A549 (cell line): ENCODE measurements at regions of chr12 and their contacts with region 1.

Region 1: DNA sequence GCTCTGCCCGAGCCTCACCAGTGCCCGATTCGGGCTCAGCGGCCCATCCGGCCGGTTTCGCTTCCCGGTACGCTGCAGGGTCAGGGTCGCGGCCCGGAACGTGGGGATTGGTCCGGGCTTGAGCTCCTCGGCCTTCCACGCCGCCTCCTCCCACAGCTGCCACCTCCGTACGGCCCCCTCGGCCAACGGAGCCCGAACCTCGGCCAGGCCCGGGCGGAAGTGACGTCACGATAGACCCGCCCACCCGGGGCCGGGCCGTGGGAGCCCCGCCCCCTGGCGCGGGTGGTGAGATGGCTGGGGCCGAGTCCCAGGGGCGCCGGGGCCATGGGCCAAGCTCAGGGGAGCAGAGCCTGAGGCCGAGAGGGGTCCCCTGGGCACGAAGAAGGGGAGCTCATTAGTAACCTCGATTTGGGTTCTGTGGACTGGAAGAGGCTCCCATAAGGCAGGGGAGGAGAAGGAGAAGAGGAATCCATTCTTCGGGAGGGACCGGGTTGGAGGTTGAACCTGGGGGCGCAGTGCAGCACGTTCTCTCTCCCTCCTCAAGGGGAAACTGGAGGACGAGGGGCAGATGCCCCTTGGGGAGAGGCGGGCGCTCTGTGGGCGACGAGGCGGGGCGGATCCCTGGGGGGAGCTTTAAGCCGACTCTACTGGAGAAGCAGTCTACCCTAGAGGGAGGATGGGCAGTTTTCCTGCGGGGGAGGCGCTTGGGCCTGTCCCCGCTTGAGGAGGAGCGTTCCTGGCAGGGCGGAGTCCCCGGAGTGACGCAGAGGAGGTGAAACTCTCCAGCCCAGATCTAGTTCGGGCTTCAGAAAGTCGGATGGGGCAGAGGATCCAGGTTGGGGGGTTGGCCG is at the start of gene MLF2:
- DNase-seq: peak; percentile 98 to 99
- ATAC-seq: peak; percentile 93 to 94
- H3K4me3 ChIP-seq: peak within 1 kb of the TSS; percentile 98
- H3K27ac ChIP-seq: peak within 1 kb of the TSS; percentile 97 to 98
- H3K4me1 ChIP-seq: peaks cover 21% of the 10 kb centered on the region
- CTCF ChIP-seq: no peak; the same call in 2 of the 3 replicates
- EP300 ChIP-seq: no peak
- POLR2A ChIP-seq: peak; percentile 94
- RAD21 ChIP-seq: no peak; a peak in 2 of 5 replicates
- polyA plus RNA-seq, gene MLF2: 302 and 310 TPM in 2 replicates

Region 2: GRCh38 chr12:6723607-6724396 is 29.3 kb before region 1 on chr12 and contains the start of gene COPS7A:
- CTCF ChIA-PET with region 1: interaction called, 52 read pairs
- POLR2A ChIA-PET with region 1: interaction called, 53 read pairs
- DNase-seq: peak; percentile 99
- ATAC-seq: peak; percentile 98
- H3K4me3 ChIP-seq: peak within 1 kb of the TSS; percentile 61
- H3K27ac ChIP-seq: peak within 1 kb of the TSS; percentile 86 to 89
- H3K4me1 ChIP-seq: peaks cover 13% of the 10 kb centered on the region
- CTCF ChIP-seq: no peak
- EP300 ChIP-seq: no peak
- POLR2A ChIP-seq: peak; percentile 92
- RAD21 ChIP-seq: no peak
- polyA plus RNA-seq, gene COPS7A: 78.8 and 95.0 TPM in 2 replicates

Region 3: DNA sequence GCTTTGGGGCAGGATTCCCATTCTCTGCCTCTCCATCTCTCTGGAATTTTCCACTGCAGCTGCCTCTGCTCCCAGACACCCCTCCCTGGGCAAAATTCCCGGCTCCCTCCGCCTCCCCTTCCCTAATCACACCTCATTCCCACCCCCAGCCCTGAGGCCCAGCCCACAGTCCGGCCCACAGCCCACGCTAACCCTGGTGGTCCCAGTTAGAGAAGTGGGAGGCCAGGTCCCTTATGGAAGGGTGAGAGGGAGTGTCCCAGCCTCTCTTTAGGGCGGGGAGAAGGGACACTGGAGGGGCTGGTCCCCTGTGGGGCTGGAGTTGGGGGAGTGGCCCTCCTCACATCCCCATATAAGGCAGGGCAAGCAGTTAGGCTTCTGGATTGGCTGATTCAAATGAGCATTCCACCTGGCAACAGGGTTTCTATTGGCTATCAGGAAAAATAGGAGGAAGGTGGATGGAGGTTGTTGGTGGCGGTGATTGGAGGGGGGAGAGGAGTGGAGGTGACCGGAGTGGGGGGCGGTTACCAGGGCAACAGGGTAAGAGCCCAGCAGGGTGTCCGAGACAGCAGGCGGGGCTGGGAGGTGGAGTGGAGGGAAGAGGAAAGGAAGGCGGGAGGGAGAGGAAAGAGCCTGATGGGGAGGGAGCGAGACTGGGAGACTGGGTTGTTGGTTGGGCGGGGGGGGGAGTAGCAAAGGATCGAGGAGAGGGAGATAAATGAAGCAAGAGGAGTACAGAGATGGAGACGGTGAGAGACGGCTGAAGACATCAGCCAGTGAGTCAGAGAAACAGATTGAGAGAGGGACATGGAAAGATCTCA is 11.1 kb after region 1 on chr12:
- CTCF ChIA-PET with region 1: interaction called, 670 read pairs
- POLR2A ChIA-PET with region 1: interaction called, 118 read pairs
- DNase-seq: peak; percentile 100
- ATAC-seq: peak; percentile 69 to 87
- H3K4me3 ChIP-seq: peak overlapping the region; percentile 97
- H3K27ac ChIP-seq: peak overlapping the region; percentile 95 to 99
- H3K4me1 ChIP-seq: peaks cover 39% of the 10 kb centered on the region
- CTCF ChIP-seq: no peak
- EP300 ChIP-seq: no peak
- POLR2A ChIP-seq: peak; percentile 47
- RAD21 ChIP-seq: no peak

Region 4: GRCh38 chr12:6792522-6793201 is 39.5 kb after region 1 on chr12:
- CTCF ChIA-PET with region 1: interaction called, 670 read pairs
- POLR2A ChIA-PET with region 1: interaction called, 3 read pairs
- DNase-seq: no peak
- ATAC-seq: peak; percentile 25 to 43; a peak in 5 of 6 replicates
- H3K4me3 ChIP-seq: no peak overlapping the region
- H3K27ac ChIP-seq: no peak overlapping the region
- H3K4me1 ChIP-seq: no peaks in the 10 kb centered on the region
- CTCF ChIP-seq: no peak
- EP300 ChIP-seq: no peak
- POLR2A ChIP-seq: no peak
- RAD21 ChIP-seq: no peak

Region 5: GRCh38 chr12:6851921-6852650 is 98.9 kb after region 1 on chr12 and contains the start of gene USP5:
- CTCF ChIA-PET with region 1: interaction called, 306 read pairs
- POLR2A ChIA-PET with region 1: interaction called, 25 read pairs
- DNase-seq: peak; percentile 99 to 100
- ATAC-seq: peak; percentile 88 to 91
- H3K4me3 ChIP-seq: peak within 1 kb of the TSS; percentile 50
- H3K27ac ChIP-seq: peak within 1 kb of the TSS; percentile 87 to 89
- H3K4me1 ChIP-seq: peaks cover 23% of the 10 kb centered on the region
- CTCF ChIP-seq: no peak
- EP300 ChIP-seq: no peak
- POLR2A ChIP-seq: peak; percentile 80
- RAD21 ChIP-seq: no peak
- polyA plus RNA-seq, gene USP5: 58.6 and 64.5 TPM in 2 replicates

Region 6: GRCh38 chr12:6937481-6938297 is 184.5 kb after region 1 on chr12:
- CTCF ChIA-PET with region 1: no interaction called
- POLR2A ChIA-PET with region 1: no interaction called
- DNase-seq: peak; percentile 80 to 98
- ATAC-seq: peak; percentile 86 to 93
- H3K4me3 ChIP-seq: peak overlapping the region; percentile 49
- H3K27ac ChIP-seq: peak overlapping the region; percentile 81 to 92
- H3K4me1 ChIP-seq: peaks cover 45% of the 10 kb centered on the region
- CTCF ChIP-seq: peak; percentile 84
- EP300 ChIP-seq: no peak
- POLR2A ChIP-seq: peak; percentile 92
- RAD21 ChIP-seq: peak; percentile 37 to 40; a peak in 4 of 5 replicates